ENCODE measurements at regions of chr20 and their contacts with region 1.

Region 1: GRCh38 chr20:62065669-62066338 is at the start of gene TAF4:
- DNase-seq: peak; percentile 74 to 87 (median 79)
- H3K4me3 ChIP-seq: peak within 1 kb of the TSS; percentile 84
- H3K4me3 Mint-ChIP-seq: peak within 1 kb of the TSS; percentile 86 to 92 (median 88)
- H3K27ac ChIP-seq: peak within 1 kb of the TSS; percentile 67
- H3K27ac Mint-ChIP-seq: peak within 1 kb of the TSS; percentile 84 to 98 (median 90)
- H3K4me1 ChIP-seq: peaks cover 45% of the 10 kb centered on the region
- H3K4me1 Mint-ChIP-seq: peaks cover 42 to 52% (median 46%) of the 10 kb centered on the region in 3 donors
- H3K27me3 ChIP-seq: no peaks in the 10 kb centered on the region
- H3K27me3 Mint-ChIP-seq: peaks cover 3 to 6% of the 10 kb centered on the region in 2 donors
- total RNA-seq, gene TAF4: 20.5 to 21.0 TPM

Region 2: GRCh38 chr20:62121776-62122631 is 56.2 kb after region 1 on chr20 and contains the start of gene LSM14B:
- CTCF ChIA-PET with region 1: interaction called, 9 read pairs
- POLR2A ChIA-PET with region 1: interaction called, 61 read pairs
- DNase-seq: peak; percentile 91 to 97 (median 96)
- H3K4me3 ChIP-seq: peak within 1 kb of the TSS; percentile 60
- H3K4me3 Mint-ChIP-seq: peak within 1 kb of the TSS; percentile 88 to 93 (median 90)
- H3K27ac ChIP-seq: peak within 1 kb of the TSS; percentile 76
- H3K27ac Mint-ChIP-seq: peak within 1 kb of the TSS; percentile 87 to 98 (median 96)
- H3K4me1 ChIP-seq: peaks cover 52% of the 10 kb centered on the region
- H3K4me1 Mint-ChIP-seq: peaks cover 46 to 62% (median 51%) of the 10 kb centered on the region in 3 donors
- H3K27me3 ChIP-seq: no peaks in the 10 kb centered on the region
- H3K27me3 Mint-ChIP-seq: peaks cover 0 to 3% of the 10 kb centered on the region in 2 donors
- total RNA-seq, gene LSM14B: 35.8 to 36.4 TPM